CD8-positive, alpha-beta T cell (primary cell): ENCODE measurements at regions of chr12 and their contacts with region 1.

Region 1: DNA sequence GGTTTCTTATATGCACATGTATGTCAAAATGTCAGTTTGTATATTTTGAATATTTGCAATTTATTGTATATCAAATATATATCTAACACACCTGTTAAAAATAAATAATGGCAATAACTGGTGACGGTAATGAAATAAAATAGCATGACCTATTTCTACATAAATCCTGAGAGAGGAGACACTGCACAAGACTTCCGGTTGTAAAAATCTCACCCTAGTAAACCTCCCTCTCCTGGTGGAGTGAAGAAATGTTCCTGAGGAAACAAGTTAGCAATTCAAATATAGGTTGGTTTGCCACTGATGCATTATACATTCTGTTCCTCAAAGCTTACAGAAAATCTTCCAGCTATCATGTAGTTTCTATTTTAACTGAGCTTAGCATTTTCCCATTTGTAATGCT is 166.1 kb upstream of the SYT10 start:
- DNase-seq: peak in 1 of 9 experiments; percentile 2
- ATAC-seq: no peak
- H3K4me3 ChIP-seq: no peak overlapping the region
- H3K4me3 Mint-ChIP-seq: no peak overlapping the region
- H3K27ac ChIP-seq: no peak overlapping the region
- H3K27ac Mint-ChIP-seq: no peak overlapping the region
- H3K4me1 ChIP-seq: no peaks in the 10 kb centered on the region
- H3K4me1 Mint-ChIP-seq: no peaks in the 10 kb centered on the region
- H3K27me3 ChIP-seq: no peaks in the 10 kb centered on the region
- H3K27me3 Mint-ChIP-seq: no peaks in the 10 kb centered on the region
- CTCF ChIP-seq: no peak

Region 2: GRCh38 chr12:33628093-33628492 is 22.3 kb after region 1 on chr12:
- CTCF ChIA-PET with region 1: no interaction called
- POLR2A ChIA-PET with region 1: no interaction called
- intact Hi-C with region 1: loop called in 1 of 2 experiments (anchors 2 kb)
- DNase-seq: no peak
- ATAC-seq: no peak
- H3K4me3 ChIP-seq: no peak overlapping the region
- H3K4me3 Mint-ChIP-seq: no peak overlapping the region
- H3K27ac ChIP-seq: no peak overlapping the region
- H3K27ac Mint-ChIP-seq: no peak overlapping the region
- H3K4me1 ChIP-seq: no peaks in the 10 kb centered on the region
- H3K4me1 Mint-ChIP-seq: no peaks in the 10 kb centered on the region
- H3K27me3 ChIP-seq: no peaks in the 10 kb centered on the region
- H3K27me3 Mint-ChIP-seq: no peaks in the 10 kb centered on the region
- CTCF ChIP-seq: no peak